ENCODE measurements at regions of chr19 and their contacts with region 1.

Region 1: GRCh38 chr19:3125900-3126524 is 9.8 kb upstream of the GNA15 start:
- H3K4me3 Mint-ChIP-seq: no peak overlapping the region
- H3K27ac Mint-ChIP-seq: peak overlapping the region; percentile 79
- H3K4me1 Mint-ChIP-seq: peaks cover 21% of the 10 kb centered on the region
- H3K27me3 Mint-ChIP-seq: no peaks in the 10 kb centered on the region

Region 2: GRCh38 chr19:3075895-3076431 is 50.0 kb before region 1 on chr19:
- intact Hi-C with region 1: no loop called
- H3K4me3 Mint-ChIP-seq: no peak overlapping the region
- H3K27ac Mint-ChIP-seq: no peak overlapping the region
- H3K4me1 Mint-ChIP-seq: peaks cover 18% of the 10 kb centered on the region
- H3K27me3 Mint-ChIP-seq: peaks cover 32% of the 10 kb centered on the region

Region 3: GRCh38 chr19:3146677-3147100 is 20.7 kb after region 1 on chr19:
- intact Hi-C with region 1: no loop called
- H3K4me3 Mint-ChIP-seq: peak overlapping the region; percentile 53
- H3K27ac Mint-ChIP-seq: peak overlapping the region; percentile 91
- H3K4me1 Mint-ChIP-seq: peaks cover 53% of the 10 kb centered on the region
- H3K27me3 Mint-ChIP-seq: no peaks in the 10 kb centered on the region

Region 4: DNA sequence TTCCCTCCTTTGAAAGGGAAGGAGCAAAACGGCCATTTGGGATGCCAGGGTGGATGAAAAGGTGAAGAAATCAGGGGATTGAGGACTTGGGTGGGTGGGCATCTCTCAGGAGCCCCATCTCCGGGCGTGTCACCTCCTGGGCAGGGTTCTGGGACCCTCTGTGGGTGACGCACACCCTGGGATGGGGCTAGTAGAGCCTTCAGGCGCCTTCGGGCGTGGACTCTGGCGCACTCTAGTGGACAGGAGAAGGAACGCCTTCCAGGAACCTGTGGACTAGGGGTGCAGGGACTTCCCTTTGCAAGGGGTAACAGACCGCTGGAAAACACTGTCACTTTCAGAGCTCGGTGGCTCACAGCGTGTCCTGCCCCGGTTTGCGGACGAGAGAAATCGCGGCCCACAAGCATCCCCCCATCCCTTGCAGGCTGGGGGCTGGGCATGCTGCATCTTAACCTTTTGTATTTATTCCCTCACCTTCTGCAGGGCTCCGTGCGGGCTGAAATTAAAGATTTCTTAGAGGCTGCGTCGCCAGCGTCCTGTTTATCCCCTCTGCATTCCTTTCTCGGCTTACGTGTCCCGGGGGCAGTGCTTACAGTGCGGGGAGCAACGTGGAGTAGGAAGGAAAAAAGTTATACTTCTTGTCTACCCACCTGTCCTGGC is 37.3 kb after region 1 on chr19:
- intact Hi-C with region 1: loop called (anchors 5 kb)
- H3K4me3 Mint-ChIP-seq: no peak overlapping the region
- H3K27ac Mint-ChIP-seq: no peak overlapping the region
- H3K4me1 Mint-ChIP-seq: peaks cover 53% of the 10 kb centered on the region
- H3K27me3 Mint-ChIP-seq: no peaks in the 10 kb centered on the region